GM12878 (cell line): ENCODE measurements at regions of chr5 and their contacts with region 1.

Region 1: DNA sequence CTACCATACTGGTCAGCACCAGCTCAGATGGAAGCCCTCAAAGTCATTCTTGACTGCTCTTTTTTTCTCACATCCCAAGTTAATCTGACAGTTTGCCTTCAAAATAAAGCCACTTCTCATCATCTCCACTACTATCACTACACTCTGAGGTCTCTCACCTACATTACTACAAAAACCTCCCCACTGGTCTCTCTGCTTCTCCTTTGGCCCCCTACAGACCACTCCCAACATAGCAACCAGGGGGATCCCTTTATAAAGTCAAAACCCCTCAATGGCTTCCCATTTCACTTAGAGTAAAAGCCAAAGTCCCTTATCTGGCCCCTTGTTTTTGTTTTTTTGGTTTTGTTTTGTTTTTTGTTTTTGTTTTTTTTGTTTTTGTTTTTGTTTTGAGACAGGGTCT is 4.6 kb downstream of the ARAP3 start:
- DNase-seq: no peak
- ATAC-seq: peak; percentile 36; the same call in 1 of the 3 replicates
- H3K4me3 ChIP-seq: no peak overlapping the region
- H3K27ac ChIP-seq: no peak overlapping the region
- H3K4me1 ChIP-seq: no peaks in the 10 kb centered on the region
- H3K27me3 ChIP-seq: peaks cover 2 to 5% of the 10 kb centered on the region in 2 experiments
- CTCF ChIP-seq: 0 out of 6 replicates have a peak, but pooled peaks of 1 of the 3 experiments have one; percentile 9
- EP300 ChIP-seq: no peak
- POLR2A ChIP-seq: no peak
- RAD21 ChIP-seq: no peak

Region 2: DNA sequence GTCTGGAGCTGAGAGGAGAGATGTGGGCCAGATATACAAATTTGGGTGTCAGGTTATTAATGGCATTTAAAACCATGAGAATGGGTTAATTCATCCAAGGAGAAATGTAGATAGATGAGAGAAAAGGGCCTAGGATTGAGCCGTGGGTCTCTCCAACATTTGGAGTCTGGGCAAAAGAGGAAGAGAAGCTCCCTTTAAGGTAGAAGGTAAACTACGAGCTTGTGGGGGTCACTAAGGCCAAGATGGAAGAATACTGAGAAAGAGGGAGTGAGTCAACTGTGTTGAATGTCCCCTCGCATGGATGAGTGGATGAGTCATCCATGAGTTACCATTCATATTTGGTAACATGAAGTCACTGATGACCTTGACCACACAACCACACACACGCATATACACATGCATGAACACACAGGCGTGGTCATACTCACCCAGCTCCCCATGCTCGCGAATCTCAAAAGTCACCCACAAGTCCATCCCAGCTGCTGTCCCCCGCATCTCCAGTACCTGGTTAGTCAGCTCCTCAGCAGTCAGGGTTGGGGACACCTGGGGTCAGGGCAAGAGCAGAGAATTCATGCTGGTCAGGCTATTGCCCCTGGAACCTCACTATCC is 19.4 kb before region 1 on chr5:
- CTCF ChIA-PET with region 1: no interaction called
- POLR2A ChIA-PET with region 1: no interaction called
- RAD21 ChIA-PET with region 1: no interaction called
- SMC1A ChIA-PET with region 1: no interaction called
- in situ Hi-C with region 1: no loop called
- intact Hi-C with region 1: no loop called
- DNase-seq: no peak
- ATAC-seq: peak; percentile 88
- H3K4me3 ChIP-seq: no peak overlapping the region
- H3K27ac ChIP-seq: no peak overlapping the region
- H3K4me1 ChIP-seq: no peaks in the 10 kb centered on the region
- H3K27me3 ChIP-seq: no peaks in the 10 kb centered on the region
- CTCF ChIP-seq: no peak
- EP300 ChIP-seq: peak in 1 of 2 experiments; percentile 42; a peak in 1 of 4 replicates
- POLR2A ChIP-seq: no peak
- RAD21 ChIP-seq: no peak

Region 3: DNA sequence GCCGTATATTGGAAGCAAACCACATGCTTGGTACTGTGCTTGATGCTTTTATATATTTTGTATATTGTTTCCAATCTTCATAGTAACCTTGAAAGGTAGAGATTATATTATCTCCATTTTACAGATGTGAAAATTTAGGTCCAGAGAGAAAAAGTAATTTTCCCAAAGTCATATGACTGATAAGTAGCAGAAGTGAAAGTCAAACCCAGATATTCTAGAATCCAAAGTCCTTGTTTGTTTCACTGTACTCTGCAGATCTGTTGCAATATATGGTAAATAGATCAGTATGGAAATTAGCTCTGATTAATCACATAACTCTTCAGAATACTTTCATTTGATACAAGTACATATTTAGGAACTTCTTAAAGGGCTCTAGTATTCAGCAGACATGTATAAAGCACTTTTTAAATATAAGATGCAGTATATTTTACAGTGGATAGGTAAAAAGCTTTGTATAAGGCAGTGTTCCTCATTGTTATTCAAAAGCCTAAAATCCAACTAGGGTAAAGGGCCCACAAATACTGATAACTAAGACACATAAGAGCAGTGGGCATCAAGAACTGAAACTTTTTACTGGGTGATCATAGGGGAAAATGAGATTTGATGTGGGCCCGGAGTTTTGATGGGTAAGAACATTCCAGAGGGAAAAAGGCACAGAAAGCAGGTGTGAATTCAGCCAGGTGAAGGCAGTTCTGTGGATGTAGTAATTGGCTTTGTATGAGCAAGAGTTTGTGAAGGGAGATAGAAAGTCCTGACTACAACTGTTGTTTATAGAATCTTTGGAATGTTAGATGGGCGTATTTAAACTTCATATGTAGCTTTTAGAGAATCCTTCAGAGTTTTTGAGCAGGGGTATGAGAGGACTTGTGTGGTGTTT is 456.2 kb after region 1 on chr5:
- CTCF ChIA-PET with region 1: no interaction called
- POLR2A ChIA-PET with region 1: no interaction called
- RAD21 ChIA-PET with region 1: no interaction called
- SMC1A ChIA-PET with region 1: no interaction called
- in situ Hi-C with region 1: loop called (anchors 10 kb)
- intact Hi-C with region 1: no loop called
- DNase-seq: no peak
- ATAC-seq: no peak
- H3K4me3 ChIP-seq: no peak overlapping the region
- H3K27ac ChIP-seq: no peak overlapping the region
- H3K4me1 ChIP-seq: no peaks in the 10 kb centered on the region
- H3K27me3 ChIP-seq: no peaks in the 10 kb centered on the region
- CTCF ChIP-seq: no peak
- EP300 ChIP-seq: no peak
- POLR2A ChIP-seq: no peak
- RAD21 ChIP-seq: no peak